ENCODE measurements at regions of chr10 and their contacts with region 1.

Region 1: GRCh38 chr10:100391163-100392002 is 44.4 kb downstream of the SCD start:
- DNase-seq: no peak
- H3K4me3 ChIP-seq: no peak overlapping the region
- H3K27ac ChIP-seq: no peak overlapping the region
- H3K4me1 ChIP-seq: no peaks in the 10 kb centered on the region
- H3K27me3 ChIP-seq: no peaks in the 10 kb centered on the region
- CTCF ChIP-seq: no peak

Region 2: GRCh38 chr10:98424295-98425254 is 1966.8 kb before region 1 on chr10:
- CTCF ChIA-PET with region 1: interaction called, 10 read pairs
- POLR2A ChIA-PET with region 1: no interaction called
- intact Hi-C with region 1: no loop called
- DNase-seq: no peak
- H3K4me3 ChIP-seq: no peak overlapping the region
- H3K27ac ChIP-seq: no peak overlapping the region
- H3K4me1 ChIP-seq: no peaks in the 10 kb centered on the region
- H3K27me3 ChIP-seq: no peaks in the 10 kb centered on the region
- CTCF ChIP-seq: no peak

Measured in PC-9 (cell line).